ENCODE measurements at regions of chr5 and their contacts with region 1.

Region 1: GRCh38 chr5:101942321-101943215 is 353.5 kb downstream of the SLCO4C1 start:
- DNase-seq: peak; percentile 27
- H3K4me3 ChIP-seq: no peak overlapping the region
- H3K27ac ChIP-seq: no peak overlapping the region
- H3K4me1 ChIP-seq: no peaks in the 10 kb centered on the region
- H3K27me3 ChIP-seq: no peaks in the 10 kb centered on the region
- CTCF ChIP-seq: peak; percentile 70
- EP300 ChIP-seq: no peak
- RAD21 ChIP-seq: peak; percentile 85

Region 2: DNA sequence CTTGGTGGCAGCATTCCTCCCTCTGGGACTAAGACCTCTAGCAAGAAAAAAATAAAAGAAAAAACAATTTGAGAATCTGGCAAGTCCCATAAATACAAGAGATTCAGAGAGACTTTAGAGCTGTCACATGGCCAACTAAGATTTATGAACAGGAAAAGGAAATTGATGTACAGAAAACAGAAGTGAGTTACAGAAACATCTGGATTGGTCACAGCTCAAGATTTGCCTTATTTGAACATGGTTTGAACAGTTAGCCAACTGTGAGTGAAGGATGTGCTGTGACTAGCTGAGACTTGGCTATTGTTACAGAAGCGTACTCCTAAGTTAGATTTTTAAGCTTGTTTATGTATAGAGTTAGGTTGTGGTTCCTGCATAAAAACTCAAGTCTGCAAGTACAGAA is 13.3 kb after region 1 on chr5:
- CTCF ChIA-PET with region 1: interaction called, 15 read pairs
- POLR2A ChIA-PET with region 1: no interaction called
- DNase-seq: no peak
- H3K4me3 ChIP-seq: no peak overlapping the region
- H3K27ac ChIP-seq: no peak overlapping the region
- H3K4me1 ChIP-seq: no peaks in the 10 kb centered on the region
- H3K27me3 ChIP-seq: no peaks in the 10 kb centered on the region
- CTCF ChIP-seq: no peak
- EP300 ChIP-seq: no peak
- RAD21 ChIP-seq: no peak

Region 3: GRCh38 chr5:101969742-101970141 is 27.2 kb after region 1 on chr5:
- CTCF ChIA-PET with region 1: interaction called, 37 read pairs
- POLR2A ChIA-PET with region 1: no interaction called
- DNase-seq: no peak
- H3K4me3 ChIP-seq: no peak overlapping the region
- H3K27ac ChIP-seq: no peak overlapping the region
- H3K4me1 ChIP-seq: no peaks in the 10 kb centered on the region
- H3K27me3 ChIP-seq: no peaks in the 10 kb centered on the region
- CTCF ChIP-seq: no peak
- EP300 ChIP-seq: no peak
- RAD21 ChIP-seq: no peak

Region 4: DNA sequence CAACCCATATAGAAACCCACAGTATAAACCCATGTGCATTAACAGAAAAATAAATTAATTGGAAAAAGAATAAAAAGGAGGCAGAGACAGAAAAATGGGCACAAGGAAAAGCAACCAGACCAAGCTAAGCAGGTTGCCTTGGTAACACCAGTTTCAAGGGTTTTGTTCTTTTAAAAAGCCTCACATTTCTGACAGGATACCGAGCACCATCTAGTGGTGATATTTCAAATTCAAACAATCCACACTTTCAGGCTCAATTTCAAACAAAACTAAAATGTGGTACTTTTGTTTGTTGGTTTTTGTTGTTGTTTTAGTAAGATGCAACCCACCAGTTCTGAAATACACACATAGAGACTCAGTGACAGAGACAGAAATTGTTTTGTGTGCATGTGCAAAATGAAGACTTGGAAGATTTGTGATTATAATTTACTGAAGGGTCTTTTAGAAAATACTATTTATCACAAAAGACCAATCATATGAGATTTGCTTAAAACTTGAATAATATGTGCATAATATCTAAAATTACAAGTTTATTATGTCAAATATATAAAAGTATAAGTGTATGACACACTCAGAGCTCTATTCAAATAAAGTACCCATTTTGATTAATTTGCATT is 35.3 kb after region 1 on chr5:
- CTCF ChIA-PET with region 1: interaction called, 37 read pairs
- POLR2A ChIA-PET with region 1: no interaction called
- DNase-seq: peak; percentile 54
- H3K4me3 ChIP-seq: no peak overlapping the region; a peak in 1 of 4 replicates
- H3K27ac ChIP-seq: no peak overlapping the region
- H3K4me1 ChIP-seq: no peaks in the 10 kb centered on the region
- H3K27me3 ChIP-seq: no peaks in the 10 kb centered on the region
- CTCF ChIP-seq: peak; percentile 84
- EP300 ChIP-seq: no peak
- RAD21 ChIP-seq: peak; percentile 82

Region 5: DNA sequence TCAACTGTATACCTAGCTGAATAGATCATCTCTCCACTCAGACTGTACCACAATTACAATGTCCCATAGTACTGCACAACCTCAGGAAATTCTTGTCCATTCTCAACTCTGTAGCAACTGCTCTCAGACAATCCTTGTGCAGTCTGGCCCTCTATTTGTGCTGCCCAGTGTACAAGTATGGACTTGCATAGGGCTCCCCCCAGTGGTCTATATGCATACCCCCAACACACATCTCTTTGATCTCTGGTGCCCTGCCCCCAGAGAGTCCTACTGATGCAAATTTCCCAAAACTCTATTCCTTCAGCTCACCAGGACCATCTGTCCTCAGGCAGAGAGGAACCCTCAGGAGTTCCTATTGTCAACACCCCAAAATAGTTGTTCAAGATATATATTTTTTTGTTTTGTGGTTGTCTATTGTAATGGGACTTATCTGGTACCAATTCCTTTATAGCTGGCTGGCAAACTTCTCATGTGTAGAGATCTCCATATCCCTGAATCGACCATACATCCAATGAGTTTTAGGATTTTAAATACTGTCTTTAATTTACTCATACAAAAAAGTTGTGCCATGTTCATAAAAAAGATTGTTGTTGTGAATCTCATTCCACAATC is 148.3 kb after region 1 on chr5:
- CTCF ChIA-PET with region 1: interaction called, 29 read pairs
- POLR2A ChIA-PET with region 1: no interaction called
- DNase-seq: peak; percentile 43
- H3K4me3 ChIP-seq: no peak overlapping the region
- H3K27ac ChIP-seq: no peak overlapping the region
- H3K4me1 ChIP-seq: no peaks in the 10 kb centered on the region; a peak in 1 of 4 replicates
- H3K27me3 ChIP-seq: no peaks in the 10 kb centered on the region
- CTCF ChIP-seq: peak; percentile 49
- EP300 ChIP-seq: no peak
- RAD21 ChIP-seq: peak; percentile 63

Region 6: GRCh38 chr5:102153003-102153759 is 210.6 kb after region 1 on chr5:
- CTCF ChIA-PET with region 1: interaction called, 22 read pairs
- POLR2A ChIA-PET with region 1: no interaction called
- DNase-seq: peak; percentile 69
- H3K4me3 ChIP-seq: no peak overlapping the region; a peak in 1 of 4 replicates
- H3K27ac ChIP-seq: no peak overlapping the region
- H3K4me1 ChIP-seq: no peaks in the 10 kb centered on the region
- H3K27me3 ChIP-seq: no peaks in the 10 kb centered on the region
- CTCF ChIP-seq: peak; percentile 68
- EP300 ChIP-seq: no peak
- RAD21 ChIP-seq: peak; percentile 64